PC-3 (cell line): ENCODE measurements at regions of chr7 and their contacts with region 1.

Region 1: GRCh38 chr7:55065079-55065478 is 46.3 kb downstream of the EGFR start:
- DNase-seq: peak; percentile 89
- ATAC-seq: peak; percentile 88
- H3K4me3 ChIP-seq: peak overlapping the region; percentile 46; the same call in 1 of the 2 replicates
- H3K27ac ChIP-seq: peak overlapping the region; percentile 97
- H3K4me1 ChIP-seq: peaks cover 48% of the 10 kb centered on the region
- H3K27me3 ChIP-seq: no peaks in the 10 kb centered on the region
- CTCF ChIP-seq: no peak

Region 2: DNA sequence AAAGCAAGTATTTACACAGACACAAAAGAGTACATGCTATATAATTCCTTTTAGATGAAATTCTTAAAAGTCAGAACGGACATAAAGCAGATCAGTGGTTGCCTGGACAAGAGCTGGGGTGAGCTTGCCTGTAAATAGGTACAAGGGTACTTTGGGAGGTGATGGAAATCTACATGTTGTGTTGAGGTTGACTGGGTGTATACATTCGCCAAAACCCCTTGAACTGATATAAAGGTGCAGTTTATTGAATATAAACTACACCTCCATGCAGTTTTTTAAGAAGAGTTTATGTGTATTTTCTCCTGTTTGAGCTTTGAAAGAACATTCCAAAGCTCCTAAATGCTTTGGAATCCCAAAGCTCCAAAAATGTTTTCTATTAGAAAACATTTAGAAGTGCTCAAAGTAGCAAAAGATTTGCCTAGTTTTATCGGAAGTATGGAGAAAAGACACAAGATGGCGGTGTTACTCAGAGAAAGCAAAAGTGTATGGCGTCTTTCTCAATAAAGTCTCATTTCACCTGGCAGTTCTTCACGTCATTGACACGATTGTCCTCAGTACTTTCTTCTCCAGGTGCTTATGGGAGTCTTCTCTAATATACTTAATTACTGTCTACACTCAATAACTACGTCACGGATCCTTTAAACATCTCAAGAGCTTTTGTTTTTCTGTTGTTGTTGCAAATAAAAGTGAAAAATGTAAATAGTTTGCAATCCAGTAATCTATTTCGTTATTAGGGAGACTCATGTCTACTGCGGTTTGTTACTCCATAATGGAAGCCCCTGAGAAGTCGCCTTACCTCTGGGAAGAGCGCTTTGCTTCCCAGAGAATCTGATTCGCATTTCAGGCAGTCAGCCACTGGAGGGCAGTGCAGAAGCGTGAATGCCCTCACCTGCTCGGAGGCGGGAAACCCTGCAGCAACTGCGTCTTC is 291.3 kb before region 1 on chr7:
- CTCF ChIA-PET with region 1: interaction called, 3 read pairs
- POLR2A ChIA-PET with region 1: no interaction called
- intact Hi-C with region 1: loop called (anchors 5 kb)
- DNase-seq: peak; percentile 94
- ATAC-seq: peak; percentile 88
- H3K4me3 ChIP-seq: peak overlapping the region; percentile 67
- H3K27ac ChIP-seq: peak overlapping the region; percentile 54
- H3K4me1 ChIP-seq: peaks cover 21% of the 10 kb centered on the region
- H3K27me3 ChIP-seq: no peaks in the 10 kb centered on the region
- CTCF ChIP-seq: peak; percentile 86

Region 3: DNA sequence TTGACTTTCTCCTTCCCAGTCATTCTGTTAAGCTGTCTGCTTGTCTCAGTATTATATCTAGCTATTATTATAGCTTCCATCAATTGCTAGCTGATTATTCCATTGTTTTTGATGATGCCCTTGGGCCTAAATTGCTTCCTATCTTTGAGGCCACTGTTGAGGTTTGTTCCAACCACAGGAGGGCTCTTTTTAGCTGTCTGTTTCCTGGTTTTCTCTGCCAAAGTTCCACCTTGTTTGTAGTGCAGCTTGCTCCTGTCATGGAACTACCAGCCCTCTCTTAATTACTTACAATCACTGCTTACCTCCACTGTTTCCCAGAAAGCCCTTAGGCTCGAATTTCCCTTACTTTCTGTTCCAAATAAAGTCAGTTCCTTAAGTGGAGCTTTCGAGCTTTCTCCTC is 187.4 kb before region 1 on chr7:
- CTCF ChIA-PET with region 1: interaction called, 3 read pairs
- POLR2A ChIA-PET with region 1: no interaction called
- intact Hi-C with region 1: loop called (anchors 5 kb)
- DNase-seq: peak; percentile 54
- ATAC-seq: peak; percentile 35
- H3K4me3 ChIP-seq: no peak overlapping the region
- H3K27ac ChIP-seq: no peak overlapping the region
- H3K4me1 ChIP-seq: peaks cover 30% of the 10 kb centered on the region
- H3K27me3 ChIP-seq: no peaks in the 10 kb centered on the region
- CTCF ChIP-seq: peak; percentile 56

Region 4: DNA sequence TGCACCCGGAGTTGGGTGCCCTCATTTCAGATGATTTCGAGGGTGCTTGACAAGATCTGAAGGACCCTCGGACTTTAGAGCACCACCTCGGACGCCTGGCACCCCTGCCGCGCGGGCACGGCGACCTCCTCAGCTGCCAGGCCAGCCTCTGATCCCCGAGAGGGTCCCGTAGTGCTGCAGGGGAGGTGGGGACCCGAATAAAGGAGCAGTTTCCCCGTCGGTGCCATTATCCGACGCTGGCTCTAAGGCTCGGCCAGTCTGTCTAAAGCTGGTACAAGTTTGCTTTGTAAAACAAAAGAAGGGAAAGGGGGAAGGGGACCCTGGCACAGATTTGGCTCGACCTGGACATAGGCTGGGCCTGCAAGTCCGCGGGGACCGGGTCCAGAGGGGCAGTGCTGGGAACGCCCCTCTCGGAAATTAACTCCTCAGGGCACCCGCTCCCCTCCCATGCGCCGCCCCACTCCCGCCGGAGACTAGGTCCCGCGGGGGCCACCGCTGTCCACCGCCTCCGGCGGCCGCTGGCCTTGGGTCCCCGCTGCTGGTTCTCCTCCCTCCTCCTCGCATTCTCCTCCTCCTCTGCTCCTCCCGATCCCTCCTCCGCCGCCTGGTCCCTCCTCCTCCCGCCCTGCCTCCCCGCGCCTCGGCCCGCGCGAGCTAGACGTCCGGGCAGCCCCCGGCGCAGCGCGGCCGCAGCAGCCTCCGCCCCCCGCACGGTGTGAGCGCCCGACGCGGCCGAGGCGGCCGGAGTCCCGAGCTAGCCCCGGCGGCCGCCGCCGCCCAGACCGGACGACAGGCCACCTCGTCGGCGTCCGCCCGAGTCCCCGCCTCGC is 46.5 kb before region 1 on chr7 and contains the start of gene EGFR:
- CTCF ChIA-PET with region 1: no interaction called
- POLR2A ChIA-PET with region 1: interaction called, 8 read pairs
- intact Hi-C with region 1: loop called (anchors 1 kb)
- DNase-seq: peak; percentile 76
- ATAC-seq: peak; percentile 80
- H3K4me3 ChIP-seq: peak within 1 kb of the TSS; percentile 90
- H3K27ac ChIP-seq: peak within 1 kb of the TSS; percentile 69
- H3K4me1 ChIP-seq: peaks cover 27% of the 10 kb centered on the region
- H3K27me3 ChIP-seq: no peaks in the 10 kb centered on the region
- CTCF ChIP-seq: no peak
- total RNA-seq, gene EGFR: 50.0 and 64.6 TPM in 2 replicates

Region 5: DNA sequence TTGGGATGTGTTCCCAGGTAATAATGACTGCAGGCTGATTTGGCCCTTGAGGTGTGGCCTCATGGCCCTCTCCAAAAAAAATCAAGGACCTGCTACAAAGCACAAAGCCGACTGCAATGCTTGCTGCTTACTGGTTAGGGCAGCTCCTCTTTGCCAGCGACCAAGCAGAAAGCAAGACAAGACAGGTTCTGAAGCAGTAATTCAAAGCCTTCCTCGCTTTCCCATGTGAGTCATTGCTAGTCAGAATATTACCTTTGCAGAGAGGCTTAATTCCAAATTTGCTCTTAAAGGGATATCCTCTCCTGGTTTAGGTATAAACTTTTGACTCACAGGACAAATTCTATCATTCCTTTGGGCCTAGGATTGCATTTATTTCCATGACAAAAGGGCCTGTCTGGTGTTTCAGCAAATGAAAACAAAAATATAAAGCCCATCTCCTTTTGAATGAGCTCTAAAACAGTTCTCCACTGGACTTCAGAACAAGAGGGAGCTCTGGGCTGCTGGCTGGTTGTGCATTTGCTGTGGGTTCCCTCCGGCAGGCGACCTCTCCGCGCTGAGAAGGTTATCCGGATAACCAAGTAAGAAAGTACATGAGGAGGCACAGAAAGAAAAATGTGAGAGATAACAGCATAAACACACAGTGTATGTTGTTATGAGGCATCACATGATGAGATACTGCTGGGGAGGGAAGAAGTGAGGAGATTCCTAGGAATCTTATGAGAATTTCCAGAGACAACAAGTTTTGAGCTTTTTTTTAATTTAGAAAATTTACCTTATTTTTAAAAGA is 44.5 kb after region 1 on chr7:
- CTCF ChIA-PET with region 1: no interaction called
- POLR2A ChIA-PET with region 1: no interaction called
- intact Hi-C with region 1: loop called (anchors 1 kb)
- DNase-seq: peak; percentile 91
- ATAC-seq: peak; percentile 87
- H3K4me3 ChIP-seq: peak overlapping the region; percentile 28; the same call in 1 of the 2 replicates
- H3K27ac ChIP-seq: peak overlapping the region; percentile 91
- H3K4me1 ChIP-seq: peaks cover 42% of the 10 kb centered on the region
- H3K27me3 ChIP-seq: no peaks in the 10 kb centered on the region
- CTCF ChIP-seq: no peak